CD4-positive, alpha-beta T cell (primary cell): ENCODE measurements at regions of chr20 and their contacts with region 1.

Region 1: GRCh38 chr20:35541783-35542588 is at the start of gene ERGIC3:
- DNase-seq: peak; percentile 95 to 99 (median 96)
- ATAC-seq: peak; percentile 99
- H3K4me3 ChIP-seq: peak within 1 kb of the TSS; percentile 75
- H3K4me3 Mint-ChIP-seq: peak within 1 kb of the TSS; percentile 97
- H3K27ac ChIP-seq: peak within 1 kb of the TSS; percentile 65 to 81
- H3K27ac Mint-ChIP-seq: peak within 1 kb of the TSS; percentile 89
- H3K4me1 ChIP-seq: peaks cover 18% of the 10 kb centered on the region
- H3K4me1 Mint-ChIP-seq: peaks cover 32% of the 10 kb centered on the region
- H3K27me3 ChIP-seq: no peaks in the 10 kb centered on the region
- H3K27me3 Mint-ChIP-seq: no peaks in the 10 kb centered on the region
- CTCF ChIP-seq: no peak
- total RNA-seq, gene ERGIC3: 144 to 146 TPM

Region 2: DNA sequence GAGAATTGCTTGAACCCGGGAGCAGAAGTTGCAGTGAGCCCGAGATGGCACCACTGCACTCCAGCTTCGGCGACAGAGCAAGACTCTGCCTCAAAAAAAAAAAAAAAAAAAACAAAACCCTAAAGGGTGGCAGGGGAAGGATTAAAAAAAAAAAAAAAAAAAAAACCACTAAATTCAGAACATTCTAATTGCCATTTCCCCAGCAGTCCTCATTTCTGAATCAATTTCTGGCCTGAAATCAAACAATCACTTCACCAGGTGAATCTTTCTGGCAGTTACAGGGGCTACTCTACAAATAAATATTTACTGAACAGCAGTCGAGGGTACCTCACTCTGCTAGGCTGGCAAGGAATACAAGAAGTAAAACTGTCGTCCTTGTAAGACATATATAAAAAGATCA is 131.4 kb before region 1 on chr20:
- CTCF ChIA-PET with region 1: no interaction called
- POLR2A ChIA-PET with region 1: no interaction called
- intact Hi-C with region 1: loop called in 1 of 2 experiments (anchors 5 kb)
- DNase-seq: no peak
- ATAC-seq: no peak
- H3K4me3 ChIP-seq: no peak overlapping the region
- H3K4me3 Mint-ChIP-seq: peak overlapping the region; percentile 96
- H3K27ac ChIP-seq: no peak overlapping the region
- H3K27ac Mint-ChIP-seq: peak overlapping the region; percentile 90
- H3K4me1 ChIP-seq: peaks cover 17% of the 10 kb centered on the region
- H3K4me1 Mint-ChIP-seq: peaks cover 23% of the 10 kb centered on the region
- H3K27me3 ChIP-seq: no peaks in the 10 kb centered on the region
- H3K27me3 Mint-ChIP-seq: no peaks in the 10 kb centered on the region
- CTCF ChIP-seq: no peak

Region 3: GRCh38 chr20:35490736-35491181 is 51.2 kb before region 1 on chr20:
- CTCF ChIA-PET with region 1: no interaction called
- POLR2A ChIA-PET with region 1: interaction called, 10 read pairs
- intact Hi-C with region 1: no loop called
- DNase-seq: peak; percentile 41 to 89 (median 59)
- ATAC-seq: peak; percentile 99
- H3K4me3 ChIP-seq: peak overlapping the region; percentile 94
- H3K4me3 Mint-ChIP-seq: peak overlapping the region; percentile 100
- H3K27ac ChIP-seq: peak overlapping the region; percentile 63 to 87
- H3K27ac Mint-ChIP-seq: peak overlapping the region; percentile 98
- H3K4me1 ChIP-seq: peaks cover 59% of the 10 kb centered on the region
- H3K4me1 Mint-ChIP-seq: peaks cover 72% of the 10 kb centered on the region
- H3K27me3 ChIP-seq: no peaks in the 10 kb centered on the region
- H3K27me3 Mint-ChIP-seq: no peaks in the 10 kb centered on the region
- CTCF ChIP-seq: no peak

Region 4: DNA sequence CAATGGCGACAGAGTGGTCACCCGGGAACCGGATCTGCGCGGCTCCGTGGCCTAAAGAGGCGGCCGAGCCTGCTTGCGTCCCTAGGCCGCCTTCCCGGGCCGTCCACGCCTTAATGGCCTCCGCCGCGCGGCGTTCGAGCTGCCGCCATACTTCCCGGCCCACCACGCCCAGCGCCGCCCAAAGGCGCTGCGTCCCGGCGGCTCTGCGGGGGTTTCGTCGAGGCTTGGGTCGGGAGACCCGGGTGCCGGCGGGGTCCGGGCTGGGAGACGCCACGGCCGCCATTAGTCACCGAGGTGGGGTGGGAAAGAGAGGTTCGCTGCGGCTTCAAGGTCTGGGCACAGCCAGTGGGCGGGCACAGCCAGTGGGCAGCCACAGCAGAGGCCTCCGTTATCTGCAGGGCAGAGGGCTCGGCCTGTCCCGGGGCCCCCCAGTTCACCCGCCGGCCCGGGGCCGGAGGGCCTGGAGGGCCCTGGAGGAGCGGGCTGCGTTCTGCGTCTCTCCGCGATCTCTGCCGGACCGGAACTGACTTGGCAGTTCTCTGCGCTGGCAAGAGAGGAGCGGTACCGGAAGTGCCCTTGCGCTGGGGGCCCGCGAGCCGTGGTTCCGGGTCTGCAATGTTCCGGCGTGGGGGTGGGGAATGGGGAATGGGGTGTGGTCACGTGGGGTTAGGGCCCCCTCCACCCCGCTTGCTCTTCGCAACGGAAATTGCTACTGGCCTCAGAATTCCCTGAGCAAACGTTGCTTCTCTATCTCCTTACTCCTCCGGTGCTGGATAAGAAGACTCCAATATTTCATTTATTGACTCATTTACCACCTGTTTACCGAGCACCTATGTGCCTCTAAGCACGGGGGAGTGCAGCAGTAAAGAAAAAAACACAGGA is 508.7 kb after region 1 on chr20:
- CTCF ChIA-PET with region 1: no interaction called
- POLR2A ChIA-PET with region 1: no interaction called
- intact Hi-C with region 1: loop called in 1 of 2 experiments (anchors 5 kb)
- DNase-seq: peak; percentile 77 to 94 (median 90)
- ATAC-seq: peak; percentile 95
- H3K4me3 ChIP-seq: peak overlapping the region; percentile 87
- H3K4me3 Mint-ChIP-seq: peak overlapping the region; percentile 98
- H3K27ac ChIP-seq: peak overlapping the region; percentile 83 to 88
- H3K27ac Mint-ChIP-seq: peak overlapping the region; percentile 94
- H3K4me1 ChIP-seq: peaks cover 7% of the 10 kb centered on the region
- H3K4me1 Mint-ChIP-seq: peaks cover 55% of the 10 kb centered on the region
- H3K27me3 ChIP-seq: no peaks in the 10 kb centered on the region
- H3K27me3 Mint-ChIP-seq: no peaks in the 10 kb centered on the region
- CTCF ChIP-seq: no peak